ENCODE measurements at regions of chr1 and their contacts with region 1.

Region 1: DNA sequence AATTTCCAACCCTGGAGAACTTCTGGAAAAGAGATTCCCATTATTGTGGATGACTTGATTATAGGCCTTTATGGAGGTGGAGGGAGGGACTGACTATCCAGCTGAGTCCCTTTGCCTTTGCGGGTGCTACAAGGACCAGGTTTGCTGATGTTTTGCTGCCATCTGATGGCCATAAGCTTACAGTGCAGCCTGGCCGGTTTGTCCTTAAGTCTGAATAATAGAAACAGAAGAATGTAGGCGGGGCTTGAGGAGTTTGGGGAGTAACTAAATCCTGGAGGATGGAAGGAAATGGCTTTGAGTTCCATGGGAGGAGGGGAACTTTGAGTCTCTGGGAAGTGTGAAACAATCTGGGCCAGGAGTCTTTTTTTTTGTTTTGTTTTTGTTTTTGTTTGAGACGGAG is 55.7 kb upstream of the CD1D start:
- DNase-seq: peak; percentile 86
- H3K4me3 ChIP-seq: no peak overlapping the region
- H3K27ac ChIP-seq: no peak overlapping the region
- H3K4me1 ChIP-seq: no peaks in the 10 kb centered on the region
- H3K27me3 ChIP-seq: peaks cover 8% of the 10 kb centered on the region
- CTCF ChIP-seq: peak; percentile 87 to 97 (median 91)
- EP300 ChIP-seq: no peak
- POLR2A ChIP-seq: no peak

Region 2: GRCh38 chr1:157580179-157580827 is 544.7 kb before region 1 on chr1:
- in situ Hi-C with region 1: no loop called
- intact Hi-C with region 1: loop called (anchors 10 kb)
- DNase-seq: peak; percentile 24
- H3K4me3 ChIP-seq: no peak overlapping the region
- H3K27ac ChIP-seq: no peak overlapping the region
- H3K4me1 ChIP-seq: no peaks in the 10 kb centered on the region
- H3K27me3 ChIP-seq: no peaks in the 10 kb centered on the region
- CTCF ChIP-seq: peak; percentile 58 to 69 (median 62)
- EP300 ChIP-seq: no peak
- POLR2A ChIP-seq: no peak

Region 3: GRCh38 chr1:157963713-157964112 is 161.3 kb before region 1 on chr1:
- in situ Hi-C with region 1: loop called in 3 of 4 experiments (anchors 10 kb)
- intact Hi-C with region 1: loop called (anchors 5 kb)
- DNase-seq: peak; percentile 73
- H3K4me3 ChIP-seq: no peak overlapping the region
- H3K27ac ChIP-seq: no peak overlapping the region
- H3K4me1 ChIP-seq: peaks cover 5 to 22% (median 15%) of the 10 kb centered on the region in 4 donors
- H3K27me3 ChIP-seq: no peaks in the 10 kb centered on the region
- CTCF ChIP-seq: peak; percentile 91 to 95 (median 93)
- EP300 ChIP-seq: no peak
- POLR2A ChIP-seq: no peak

Region 4: GRCh38 chr1:158188611-158189010 is 63.6 kb after region 1 on chr1:
- in situ Hi-C with region 1: no loop called
- intact Hi-C with region 1: no loop called
- DNase-seq: no peak
- H3K4me3 ChIP-seq: no peak overlapping the region
- H3K27ac ChIP-seq: no peak overlapping the region
- H3K4me1 ChIP-seq: peaks cover 0 to 3% (median 0%) of the 10 kb centered on the region in 4 donors
- H3K27me3 ChIP-seq: peaks cover 22% of the 10 kb centered on the region
- CTCF ChIP-seq: no peak
- EP300 ChIP-seq: no peak
- POLR2A ChIP-seq: no peak

Measured in transverse colon (tissue), 4 donors.